ENCODE measurements at regions of chr1 and their contacts with region 1.

Region 1: DNA sequence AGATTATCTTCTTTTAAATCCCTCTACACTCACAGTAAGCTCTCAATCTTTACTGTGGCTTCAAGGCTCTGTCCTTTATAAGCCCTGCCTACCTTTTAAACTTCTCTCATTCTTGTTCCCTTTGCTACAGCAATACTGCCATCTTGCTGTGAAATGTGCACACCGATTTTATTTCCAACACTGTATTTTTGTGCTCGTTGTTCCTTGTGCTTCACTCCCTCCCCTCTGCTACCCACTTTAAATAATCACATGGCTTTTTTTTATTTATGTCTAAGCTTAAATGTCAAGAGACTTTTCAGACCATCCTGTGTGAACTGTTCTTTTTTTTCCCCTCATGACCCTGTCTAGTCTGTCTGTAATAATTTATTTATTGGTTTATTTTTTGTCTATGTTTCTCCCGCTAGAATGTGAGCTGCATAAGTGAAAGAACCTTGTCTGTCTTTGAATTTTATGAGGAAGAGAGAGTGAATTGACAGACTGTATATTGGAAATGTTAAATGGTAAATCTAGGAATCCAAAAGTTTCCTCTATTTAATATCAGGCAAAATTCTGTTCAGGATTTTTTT is 45.7 kb downstream of the ABCD3 start:
- DNase-seq: peak; percentile 6 to 37 (median 21)
- H3K4me3 ChIP-seq: no peak overlapping the region
- H3K4me3 Mint-ChIP-seq: no peak overlapping the region
- H3K27ac ChIP-seq: no peak overlapping the region
- H3K27ac Mint-ChIP-seq: no peak overlapping the region
- H3K4me1 ChIP-seq: peaks cover 0 to 4% of the 10 kb centered on the region in 2 donors
- H3K4me1 Mint-ChIP-seq: peaks cover 8% of the 10 kb centered on the region
- H3K27me3 ChIP-seq: no peaks in the 10 kb centered on the region
- H3K27me3 Mint-ChIP-seq: no peaks in the 10 kb centered on the region
- CTCF ChIP-seq: peak; percentile 58

Region 2: DNA sequence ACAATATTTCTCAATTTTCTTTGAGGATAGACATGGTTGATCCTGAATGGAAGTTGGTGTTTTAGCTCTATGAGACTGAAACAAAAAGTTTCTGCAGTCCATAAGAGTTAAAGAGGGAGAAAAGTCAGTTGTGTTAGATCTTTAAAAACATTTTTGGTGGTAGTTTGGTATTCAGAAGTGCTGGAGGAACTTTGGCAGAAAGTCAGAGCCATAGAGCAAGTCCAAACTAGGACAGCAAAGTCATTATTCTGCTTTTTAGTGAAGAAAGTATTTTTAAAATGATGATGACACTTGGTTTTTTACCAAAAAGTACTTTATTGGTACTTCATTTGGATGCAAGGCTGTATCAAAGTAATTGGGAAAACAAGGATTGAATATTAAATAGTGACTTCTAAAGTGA is 974.1 kb before region 1 on chr1:
- intact Hi-C with region 1: no loop called
- DNase-seq: no peak
- H3K4me3 ChIP-seq: no peak overlapping the region
- H3K4me3 Mint-ChIP-seq: no peak overlapping the region
- H3K27ac ChIP-seq: no peak overlapping the region
- H3K27ac Mint-ChIP-seq: no peak overlapping the region
- H3K4me1 ChIP-seq: peaks cover 0 to 7% of the 10 kb centered on the region in 2 donors
- H3K4me1 Mint-ChIP-seq: peaks cover 4% of the 10 kb centered on the region
- H3K27me3 ChIP-seq: no peaks in the 10 kb centered on the region
- H3K27me3 Mint-ChIP-seq: no peaks in the 10 kb centered on the region
- CTCF ChIP-seq: no peak

Region 3: GRCh38 chr1:94055459-94056122 is 408.3 kb before region 1 on chr1:
- intact Hi-C with region 1: loop called in 1 of 2 experiments (anchors 5 kb)
- DNase-seq: no peak
- H3K4me3 ChIP-seq: no peak overlapping the region
- H3K4me3 Mint-ChIP-seq: no peak overlapping the region
- H3K27ac ChIP-seq: no peak overlapping the region
- H3K27ac Mint-ChIP-seq: no peak overlapping the region
- H3K4me1 ChIP-seq: no peaks in the 10 kb centered on the region
- H3K4me1 Mint-ChIP-seq: no peaks in the 10 kb centered on the region
- H3K27me3 ChIP-seq: peaks cover 11 to 19% of the 10 kb centered on the region in 2 donors
- H3K27me3 Mint-ChIP-seq: peaks cover 18 to 37% (median 18%) of the 10 kb centered on the region in 3 donors
- CTCF ChIP-seq: no peak

Region 4: DNA sequence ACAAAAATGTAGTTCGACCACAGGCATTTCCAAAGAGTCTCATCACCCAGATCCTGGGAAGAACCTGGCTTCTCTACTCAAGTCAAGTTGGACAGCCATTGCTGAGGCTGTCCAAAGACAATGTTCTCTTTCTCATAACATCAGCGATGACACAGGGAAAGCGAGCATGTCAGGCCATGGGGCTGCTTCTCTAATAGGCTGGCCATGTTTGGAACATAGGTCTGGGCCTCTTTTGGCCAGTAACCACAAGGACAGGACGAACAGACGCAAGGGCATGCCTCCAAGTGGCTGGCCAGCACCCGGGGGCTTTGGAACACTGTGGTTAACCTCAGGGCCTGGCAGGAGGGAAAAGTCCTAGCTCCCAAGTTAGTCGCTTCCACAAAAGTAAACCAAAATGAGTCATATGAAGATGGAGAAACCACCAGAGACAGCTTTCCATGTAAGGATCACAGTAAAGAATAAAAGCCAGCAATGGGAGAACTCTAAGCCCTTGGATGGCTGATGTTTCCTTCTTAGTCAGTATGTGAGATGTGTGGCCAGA is 275.7 kb after region 1 on chr1:
- intact Hi-C with region 1: no loop called
- DNase-seq: peak in 1 of 3 donors; percentile 38
- H3K4me3 ChIP-seq: no peak overlapping the region
- H3K4me3 Mint-ChIP-seq: no peak overlapping the region
- H3K27ac ChIP-seq: no peak overlapping the region
- H3K27ac Mint-ChIP-seq: peak overlapping the region in 3 of 7 donors; percentile 4 to 54 (median 16)
- H3K4me1 ChIP-seq: peaks cover 39 to 51% of the 10 kb centered on the region in 2 donors
- H3K4me1 Mint-ChIP-seq: peaks cover 60% of the 10 kb centered on the region
- H3K27me3 ChIP-seq: no peaks in the 10 kb centered on the region
- H3K27me3 Mint-ChIP-seq: peaks cover 0 to 2% (median 0%) of the 10 kb centered on the region in 3 donors
- CTCF ChIP-seq: no peak